A673 (cell line): ENCODE measurements at regions of chr12 and their contacts with region 1.

Region 1: DNA sequence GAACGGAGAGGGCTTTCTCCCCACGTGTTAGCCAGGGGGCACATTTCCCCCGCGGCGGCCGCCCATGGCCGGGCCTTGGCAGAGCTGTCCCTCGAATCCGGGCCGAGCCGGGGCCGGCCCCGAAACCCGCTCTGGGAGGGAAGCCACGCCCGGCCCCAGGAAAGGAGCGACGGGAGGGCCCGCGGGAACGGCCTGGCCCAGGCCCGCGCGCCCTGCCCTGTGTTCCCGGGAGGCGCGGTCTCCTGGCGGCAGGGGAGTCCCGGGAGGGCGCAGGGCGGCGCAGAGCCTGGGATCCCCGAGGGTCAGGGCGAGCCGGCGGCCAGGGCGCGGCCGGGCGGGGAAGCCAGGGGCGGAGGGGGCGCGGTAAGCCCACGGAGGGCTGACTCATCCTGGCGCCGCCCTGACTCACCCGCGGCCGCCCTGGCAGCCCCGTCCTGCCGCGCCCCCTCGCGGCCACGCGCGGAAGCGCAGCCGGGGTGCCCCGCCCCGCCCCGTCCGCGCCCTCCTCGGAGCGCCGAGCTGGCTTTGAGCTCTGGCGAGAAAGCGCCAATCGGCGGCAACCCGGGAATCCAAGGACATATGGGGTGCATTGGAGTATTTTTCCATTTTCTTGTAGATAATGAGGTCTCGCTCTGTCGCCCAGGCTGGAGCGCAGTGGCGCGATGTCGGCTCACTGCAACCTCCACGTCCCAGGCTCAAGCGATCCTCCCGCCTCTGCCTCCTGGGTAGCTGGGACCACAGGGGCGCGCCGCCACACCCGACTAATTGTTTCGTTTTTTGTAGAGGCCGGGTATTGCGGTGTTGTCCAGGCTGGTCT is 31.8 kb upstream of the PLEKHG6 start:
- DNase-seq: peak; percentile 87
- H3K4me3 ChIP-seq: peak overlapping the region; percentile 55
- H3K27ac ChIP-seq: peak overlapping the region; percentile 80
- H3K4me1 ChIP-seq: peaks cover 7% of the 10 kb centered on the region
- H3K27me3 ChIP-seq: no peaks in the 10 kb centered on the region
- CTCF ChIP-seq: peak; percentile 56

Region 2: GRCh38 chr12:5988659-5989116 is 290.0 kb before region 1 on chr12:
- CTCF ChIA-PET with region 1: interaction called, 4 read pairs
- POLR2A ChIA-PET with region 1: no interaction called
- intact Hi-C with region 1: loop called (anchors 5 kb)
- DNase-seq: peak; percentile 72
- H3K4me3 ChIP-seq: no peak overlapping the region
- H3K27ac ChIP-seq: no peak overlapping the region
- H3K4me1 ChIP-seq: no peaks in the 10 kb centered on the region
- H3K27me3 ChIP-seq: no peaks in the 10 kb centered on the region
- CTCF ChIP-seq: peak; percentile 97

Region 3: GRCh38 chr12:6052206-6052939 is 226.3 kb before region 1 on chr12:
- CTCF ChIA-PET with region 1: interaction called, 12 read pairs
- POLR2A ChIA-PET with region 1: no interaction called
- intact Hi-C with region 1: no loop called
- DNase-seq: no peak
- H3K4me3 ChIP-seq: no peak overlapping the region
- H3K27ac ChIP-seq: no peak overlapping the region
- H3K4me1 ChIP-seq: no peaks in the 10 kb centered on the region
- H3K27me3 ChIP-seq: no peaks in the 10 kb centered on the region
- CTCF ChIP-seq: no peak

Region 4: GRCh38 chr12:6195665-6196535 is 82.7 kb before region 1 on chr12:
- CTCF ChIA-PET with region 1: interaction called, 21 read pairs
- POLR2A ChIA-PET with region 1: no interaction called
- intact Hi-C with region 1: no loop called
- DNase-seq: peak; percentile 78
- H3K4me3 ChIP-seq: no peak overlapping the region
- H3K27ac ChIP-seq: no peak overlapping the region
- H3K4me1 ChIP-seq: no peaks in the 10 kb centered on the region
- H3K27me3 ChIP-seq: peaks cover 7% of the 10 kb centered on the region
- CTCF ChIP-seq: peak; percentile 86

Region 5: GRCh38 chr12:6267139-6267721 is 11.4 kb before region 1 on chr12:
- CTCF ChIA-PET with region 1: interaction called, 10 read pairs
- POLR2A ChIA-PET with region 1: no interaction called
- intact Hi-C with region 1: no loop called
- DNase-seq: no peak
- H3K4me3 ChIP-seq: no peak overlapping the region
- H3K27ac ChIP-seq: no peak overlapping the region
- H3K4me1 ChIP-seq: no peaks in the 10 kb centered on the region
- H3K27me3 ChIP-seq: no peaks in the 10 kb centered on the region
- CTCF ChIP-seq: no peak

Region 6: DNA sequence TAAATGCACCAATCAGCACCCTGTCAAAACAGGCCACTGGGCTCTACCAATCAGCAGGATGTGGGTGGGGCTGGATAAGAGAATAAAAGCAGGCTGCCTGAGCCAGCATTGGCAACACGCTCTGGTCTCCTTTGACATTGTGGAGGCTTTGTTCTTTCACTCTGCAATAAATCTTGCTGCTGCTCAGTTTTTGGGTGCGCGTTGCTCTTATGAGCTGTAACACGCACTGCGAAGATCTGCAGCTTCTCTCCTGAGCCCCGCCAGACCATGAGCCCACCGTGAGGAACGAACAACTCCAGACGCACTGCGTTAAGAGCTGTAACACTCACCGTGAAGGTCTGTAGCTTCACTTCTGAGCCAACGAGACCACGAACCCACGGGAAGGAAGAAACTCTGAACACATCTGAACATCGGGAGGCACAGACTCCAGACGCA is 430.3 kb after region 1 on chr12:
- CTCF ChIA-PET with region 1: no interaction called
- POLR2A ChIA-PET with region 1: no interaction called
- intact Hi-C with region 1: no loop called
- DNase-seq: no peak
- H3K4me3 ChIP-seq: no peak overlapping the region
- H3K27ac ChIP-seq: no peak overlapping the region
- H3K4me1 ChIP-seq: no peaks in the 10 kb centered on the region
- H3K27me3 ChIP-seq: no peaks in the 10 kb centered on the region
- CTCF ChIP-seq: no peak